ENCODE measurements at regions of chr4 and their contacts with region 1.

Region 1: DNA sequence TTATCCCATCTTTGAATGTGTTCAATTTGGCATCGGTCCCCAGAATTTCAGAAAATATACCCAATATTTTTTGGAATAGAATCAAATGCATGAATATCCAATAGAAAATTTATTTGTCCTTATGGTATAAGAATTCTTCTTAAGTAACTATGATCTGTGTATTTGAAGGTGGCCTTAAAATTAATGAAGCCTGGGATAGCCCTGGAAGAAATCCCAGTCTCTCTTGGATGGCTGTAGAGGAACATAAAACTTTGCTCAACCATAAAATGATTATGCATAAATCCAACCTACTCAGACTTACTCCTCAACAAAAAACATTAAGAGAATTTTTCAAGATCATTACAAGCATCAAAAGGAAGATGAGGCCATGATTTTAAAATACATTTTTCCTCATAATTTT is 269.4 kb upstream of the SMIM31 start:
- DNase-seq: no peak
- H3K4me3 ChIP-seq: no peak overlapping the region
- H3K27ac ChIP-seq: peak overlapping the region; percentile 12
- H3K4me1 ChIP-seq: peaks cover 52% of the 10 kb centered on the region
- H3K27me3 ChIP-seq: no peaks in the 10 kb centered on the region
- CTCF ChIP-seq: no peak

Region 2: DNA sequence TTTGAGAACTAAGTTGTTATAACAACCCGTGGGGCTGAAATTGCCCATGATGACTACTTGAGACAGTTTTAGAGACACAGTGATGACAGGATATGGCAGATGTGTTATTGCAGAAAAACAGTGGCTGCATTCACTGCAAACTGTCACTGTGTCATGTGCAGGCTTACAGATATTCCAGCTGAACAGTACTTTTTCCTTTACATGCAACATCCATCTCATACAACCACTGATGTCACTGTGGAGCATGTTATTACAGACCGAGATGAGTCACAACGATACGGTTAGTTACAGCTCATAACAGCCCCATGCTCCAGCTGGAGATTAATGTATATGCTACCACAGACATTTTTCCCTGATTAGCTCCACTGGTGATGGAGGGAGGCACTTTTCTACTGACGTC is 782.6 kb before region 1 on chr4:
- CTCF ChIA-PET with region 1: interaction called, 11 read pairs
- POLR2A ChIA-PET with region 1: no interaction called
- intact Hi-C with region 1: loop called (anchors 1 kb)
- DNase-seq: peak; percentile 93
- H3K4me3 ChIP-seq: no peak overlapping the region
- H3K27ac ChIP-seq: peak overlapping the region; percentile 78
- H3K4me1 ChIP-seq: peaks cover 56% of the 10 kb centered on the region
- H3K27me3 ChIP-seq: no peaks in the 10 kb centered on the region
- CTCF ChIP-seq: peak; percentile 34; the same call in 1 of the 2 replicates

Region 3: GRCh38 chr4:164136180-164136616 is 348.4 kb before region 1 on chr4:
- CTCF ChIA-PET with region 1: no interaction called
- POLR2A ChIA-PET with region 1: interaction called, 11 read pairs
- intact Hi-C with region 1: no loop called
- DNase-seq: peak; percentile 61
- H3K4me3 ChIP-seq: no peak overlapping the region
- H3K27ac ChIP-seq: peak overlapping the region; percentile 71
- H3K4me1 ChIP-seq: peaks cover 18% of the 10 kb centered on the region
- H3K27me3 ChIP-seq: no peaks in the 10 kb centered on the region
- CTCF ChIP-seq: no peak

Region 4: GRCh38 chr4:164410401-164410800 is 74.2 kb before region 1 on chr4:
- CTCF ChIA-PET with region 1: interaction called, 9 read pairs
- POLR2A ChIA-PET with region 1: no interaction called
- intact Hi-C with region 1: loop called (anchors 1 kb)
- DNase-seq: peak; percentile 80
- H3K4me3 ChIP-seq: no peak overlapping the region
- H3K27ac ChIP-seq: peak overlapping the region; percentile 84
- H3K4me1 ChIP-seq: peaks cover 13% of the 10 kb centered on the region
- H3K27me3 ChIP-seq: no peaks in the 10 kb centered on the region
- CTCF ChIP-seq: no peak

Region 5: GRCh38 chr4:164621886-164622521 is 137.5 kb after region 1 on chr4:
- CTCF ChIA-PET with region 1: no interaction called
- POLR2A ChIA-PET with region 1: no interaction called
- intact Hi-C with region 1: loop called (anchors 5 kb)
- DNase-seq: no peak
- H3K4me3 ChIP-seq: no peak overlapping the region
- H3K27ac ChIP-seq: no peak overlapping the region
- H3K4me1 ChIP-seq: no peaks in the 10 kb centered on the region
- H3K27me3 ChIP-seq: no peaks in the 10 kb centered on the region
- CTCF ChIP-seq: no peak

Region 6: DNA sequence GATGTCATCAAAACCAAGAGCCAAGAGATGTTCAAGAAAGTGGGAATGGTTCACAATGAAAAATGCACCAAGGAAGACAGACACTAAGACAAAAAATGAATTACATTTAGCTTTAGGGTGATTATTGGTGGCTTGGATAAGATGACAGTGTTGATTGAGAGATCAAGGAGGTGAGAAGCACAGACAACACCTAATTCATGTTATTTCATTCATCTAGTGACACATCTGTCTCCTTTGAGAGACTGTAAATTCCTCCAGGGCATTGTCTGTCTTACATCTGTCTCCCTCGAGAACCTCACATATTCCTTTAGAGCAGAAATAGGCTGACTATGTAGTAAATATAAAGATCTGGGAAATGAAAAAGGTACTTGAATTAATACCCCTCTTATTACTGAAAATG is 175.2 kb after region 1 on chr4:
- CTCF ChIA-PET with region 1: no interaction called
- POLR2A ChIA-PET with region 1: no interaction called
- intact Hi-C with region 1: no loop called
- DNase-seq: no peak
- H3K4me3 ChIP-seq: no peak overlapping the region
- H3K27ac ChIP-seq: no peak overlapping the region
- H3K4me1 ChIP-seq: no peaks in the 10 kb centered on the region
- H3K27me3 ChIP-seq: no peaks in the 10 kb centered on the region
- CTCF ChIP-seq: no peak

Region 7: GRCh38 chr4:164748375-164748774 is 263.8 kb after region 1 on chr4:
- CTCF ChIA-PET with region 1: no interaction called
- POLR2A ChIA-PET with region 1: no interaction called
- intact Hi-C with region 1: loop called (anchors 5 kb)
- DNase-seq: peak; percentile 64
- H3K4me3 ChIP-seq: no peak overlapping the region
- H3K27ac ChIP-seq: no peak overlapping the region
- H3K4me1 ChIP-seq: peaks cover 18% of the 10 kb centered on the region
- H3K27me3 ChIP-seq: no peaks in the 10 kb centered on the region
- CTCF ChIP-seq: peak; percentile 61

Region 8: DNA sequence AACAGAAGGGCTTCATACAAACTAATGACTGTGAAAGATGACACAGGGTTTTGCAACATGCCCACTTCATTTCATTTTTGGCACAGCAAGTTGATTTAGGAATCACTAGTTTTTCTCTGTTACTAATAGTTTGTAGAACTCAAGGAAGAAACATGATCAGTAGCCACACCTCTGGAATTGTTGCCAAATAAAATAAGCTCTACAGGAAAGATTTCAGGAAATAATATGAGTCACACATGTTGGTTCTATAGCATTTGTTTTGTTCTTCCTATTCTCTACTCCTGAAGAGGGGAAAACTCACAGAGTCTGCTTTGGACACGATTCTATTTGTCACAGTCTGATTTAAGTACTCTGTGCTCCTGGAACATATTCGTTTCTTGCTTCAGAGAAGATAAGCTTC is 1643.9 kb after region 1 on chr4:
- CTCF ChIA-PET with region 1: no interaction called
- POLR2A ChIA-PET with region 1: no interaction called
- intact Hi-C with region 1: no loop called
- DNase-seq: peak; percentile 37
- H3K4me3 ChIP-seq: no peak overlapping the region
- H3K27ac ChIP-seq: no peak overlapping the region
- H3K4me1 ChIP-seq: no peaks in the 10 kb centered on the region
- H3K27me3 ChIP-seq: no peaks in the 10 kb centered on the region
- CTCF ChIP-seq: no peak

Measured in A673 (cell line).